ENCODE measurements at regions of chr1 and their contacts with region 1.

Region 1: GRCh38 chr1:221263831-221264767 is 384.9 kb downstream of the HLX start:
- ATAC-seq: peak; percentile 87 to 99 (median 95)
- H3K4me3 ChIP-seq: no peak overlapping the region
- H3K27ac ChIP-seq: peak overlapping the region in 1 of 2 donors; percentile 31
- H3K4me1 ChIP-seq: peaks cover 0 to 14% of the 10 kb centered on the region in 2 donors

Region 2: DNA sequence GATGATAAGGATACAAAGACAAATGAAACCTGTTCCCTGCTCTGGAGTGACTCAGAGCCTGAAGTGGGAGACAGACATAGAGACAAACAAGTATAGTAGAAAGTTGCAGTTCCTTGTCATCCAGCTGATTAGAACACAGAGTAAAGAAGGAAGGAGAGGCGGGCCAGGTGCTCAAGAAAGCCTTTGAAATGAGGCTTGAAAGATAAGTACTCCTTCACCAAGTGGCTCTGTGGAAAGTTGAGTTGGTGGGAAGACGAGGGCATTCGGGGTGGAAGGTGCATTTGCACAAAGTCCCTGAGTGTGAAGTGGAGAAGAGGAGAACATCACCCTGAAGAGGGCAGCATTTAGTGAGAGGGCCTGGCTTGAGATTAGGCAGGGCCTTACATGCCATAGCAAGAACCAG is 719.2 kb before region 1 on chr1:
- in situ Hi-C with region 1: no loop called
- ATAC-seq: peak in 3 of 8 experiments; percentile 57 to 74 (median 62)
- H3K4me3 ChIP-seq: no peak overlapping the region
- H3K27ac ChIP-seq: no peak overlapping the region
- H3K4me1 ChIP-seq: peaks cover 0 to 11% of the 10 kb centered on the region in 2 donors

Region 3: DNA sequence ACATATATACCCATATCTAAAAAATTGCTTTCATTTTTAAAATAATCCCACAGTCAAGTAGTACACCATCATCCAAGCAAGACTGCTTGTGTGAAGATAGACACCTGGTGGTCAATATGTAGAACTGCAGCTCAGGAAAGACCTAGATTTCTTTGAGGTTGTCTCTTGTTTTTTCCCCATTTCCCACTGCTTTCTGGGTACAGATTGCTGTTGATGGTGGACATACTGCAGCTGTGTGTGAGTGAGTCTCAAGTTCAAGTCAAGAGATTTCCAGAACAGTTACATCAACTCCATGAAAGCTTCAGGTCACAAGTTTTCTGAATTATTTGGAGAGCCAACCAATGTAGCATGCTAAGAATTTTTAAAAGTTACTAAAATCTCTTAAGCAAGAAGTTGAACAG is 171.4 kb after region 1 on chr1:
- in situ Hi-C with region 1: loop called in 1 of 9 experiments (anchors 10 kb)
- ATAC-seq: peak in 6 of 8 experiments; percentile 5 to 63 (median 40)
- H3K4me3 ChIP-seq: no peak overlapping the region
- H3K27ac ChIP-seq: no peak overlapping the region
- H3K4me1 ChIP-seq: no peaks in the 10 kb centered on the region